PC-9 (cell line): ENCODE measurements at regions of chr2 and their contacts with region 1.

Region 1: GRCh38 chr2:231452799-231453508 is 11.3 kb downstream of the NCL start:
- DNase-seq: peak in 1 of 2 experiments; percentile 53
- H3K4me3 ChIP-seq: no peak overlapping the region
- H3K27ac ChIP-seq: peak overlapping the region; percentile 45
- H3K4me1 ChIP-seq: no peaks in the 10 kb centered on the region
- H3K27me3 ChIP-seq: no peaks in the 10 kb centered on the region
- CTCF ChIP-seq: no peak

Region 2: GRCh38 chr2:230824406-230824978 is 628.5 kb before region 1 on chr2:
- CTCF ChIA-PET with region 1: interaction called, 3 read pairs
- POLR2A ChIA-PET with region 1: no interaction called
- intact Hi-C with region 1: loop called (anchors 10 kb)
- DNase-seq: peak; percentile 53 to 58
- H3K4me3 ChIP-seq: peak overlapping the region; percentile 31; the same call in 1 of the 2 replicates
- H3K27ac ChIP-seq: no peak overlapping the region
- H3K4me1 ChIP-seq: no peaks in the 10 kb centered on the region
- H3K27me3 ChIP-seq: 0 out of 2 replicates have a peak, but pooled peaks cover 3% of the 10 kb centered on the region
- CTCF ChIP-seq: peak; percentile 88

Region 3: DNA sequence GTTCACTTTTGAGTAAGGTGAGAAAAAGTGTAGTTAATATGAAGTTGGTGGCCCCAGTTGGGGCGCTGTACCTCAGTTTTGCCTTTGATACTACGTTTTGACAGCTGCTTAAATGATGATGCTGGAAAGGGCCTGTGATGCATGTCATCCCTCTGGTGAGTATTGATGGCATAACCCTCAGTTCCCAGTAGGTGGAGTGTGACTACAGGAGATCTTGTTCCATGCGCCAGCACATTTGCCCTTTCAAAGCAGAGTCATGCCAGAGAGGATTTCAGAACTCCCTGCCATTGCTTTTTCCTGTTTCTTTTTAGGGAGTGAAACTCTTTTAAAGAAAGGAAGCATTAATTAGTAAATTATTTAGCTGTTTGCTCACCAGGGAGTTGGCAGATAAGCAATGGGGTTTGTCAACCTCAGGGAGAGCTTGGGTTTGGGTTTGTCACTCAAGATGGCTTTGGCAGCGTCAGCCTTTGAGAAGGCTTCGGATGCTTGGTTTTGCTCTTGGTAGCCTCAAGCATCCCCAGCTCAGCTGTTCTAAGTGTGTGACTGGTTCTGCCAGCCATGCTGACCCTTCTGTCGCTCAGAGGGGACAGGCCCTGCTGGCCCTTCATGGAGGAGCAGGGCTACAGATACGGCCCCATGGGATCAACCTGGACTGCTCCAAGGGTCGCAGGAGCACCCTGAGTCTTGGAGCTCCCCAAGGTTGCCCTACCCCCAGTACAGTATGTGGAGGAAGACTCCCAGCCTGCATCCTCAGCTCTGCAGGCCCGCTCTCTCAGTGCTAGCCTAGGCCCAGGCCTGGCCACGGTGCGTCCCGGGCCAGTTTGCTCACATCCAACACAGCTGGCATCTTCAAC is 225.4 kb before region 1 on chr2:
- CTCF ChIA-PET with region 1: interaction called, 8 read pairs
- POLR2A ChIA-PET with region 1: no interaction called
- intact Hi-C with region 1: loop called (anchors 1 kb)
- DNase-seq: peak; percentile 52 to 65
- H3K4me3 ChIP-seq: no peak overlapping the region
- H3K27ac ChIP-seq: no peak overlapping the region
- H3K4me1 ChIP-seq: no peaks in the 10 kb centered on the region
- H3K27me3 ChIP-seq: no peaks in the 10 kb centered on the region
- CTCF ChIP-seq: peak; percentile 86

Region 4: GRCh38 chr2:231436957-231437356 is 16.0 kb before region 1 on chr2:
- CTCF ChIA-PET with region 1: interaction called, 11 read pairs
- POLR2A ChIA-PET with region 1: no interaction called
- intact Hi-C with region 1: no loop called
- DNase-seq: no peak
- H3K4me3 ChIP-seq: no peak overlapping the region
- H3K27ac ChIP-seq: no peak overlapping the region
- H3K4me1 ChIP-seq: no peaks in the 10 kb centered on the region
- H3K27me3 ChIP-seq: no peaks in the 10 kb centered on the region
- CTCF ChIP-seq: no peak

Region 5: GRCh38 chr2:231648587-231649174 is 195.7 kb after region 1 on chr2:
- CTCF ChIA-PET with region 1: no interaction called
- POLR2A ChIA-PET with region 1: no interaction called
- intact Hi-C with region 1: no loop called
- DNase-seq: peak; percentile 70 to 89
- H3K4me3 ChIP-seq: no peak overlapping the region
- H3K27ac ChIP-seq: no peak overlapping the region
- H3K4me1 ChIP-seq: peaks cover 35% of the 10 kb centered on the region
- H3K27me3 ChIP-seq: no peaks in the 10 kb centered on the region
- CTCF ChIP-seq: peak; percentile 85